CD8-positive, alpha-beta memory T cell (primary cell): ENCODE measurements at regions of chr3 and their contacts with region 1.

Region 1: DNA sequence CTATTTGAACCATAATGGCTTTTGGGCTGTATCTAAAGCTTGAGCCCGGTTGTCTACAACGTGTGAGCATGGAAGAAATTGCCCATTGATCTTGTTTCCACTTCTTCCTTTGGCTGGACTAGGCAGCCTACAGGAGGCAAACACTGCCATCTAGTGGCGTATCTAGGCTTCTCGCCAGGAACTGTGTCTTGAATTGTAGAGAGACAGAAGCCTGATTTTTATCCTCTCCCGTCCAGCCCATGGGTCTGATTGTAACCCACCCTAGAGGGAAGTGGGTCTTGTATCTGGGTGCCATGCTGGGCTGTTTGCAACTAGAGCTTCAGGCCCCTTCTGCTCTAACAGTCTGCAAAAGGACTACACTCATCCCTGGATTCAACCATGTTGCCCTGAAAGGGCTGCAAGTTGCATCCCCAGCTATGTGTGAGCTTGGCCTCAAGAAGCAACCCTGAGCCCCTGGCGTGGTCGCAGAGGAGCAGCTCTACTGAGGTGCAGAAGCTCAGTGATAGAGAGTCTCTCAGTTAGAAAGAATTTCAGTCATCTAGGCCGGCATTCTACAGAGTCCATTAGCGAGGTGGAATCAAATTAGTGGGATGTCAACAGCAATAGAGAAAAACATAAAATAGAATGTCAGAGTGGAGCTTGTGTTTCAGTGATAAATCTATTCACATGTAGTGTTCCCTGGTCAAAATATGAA is 170.2 kb upstream of the UMPS start:
- DNase-seq: peak in 4 of 5 donors; percentile 10 to 57 (median 27)
- H3K4me3 ChIP-seq: no peak overlapping the region
- H3K4me3 Mint-ChIP-seq: no peak overlapping the region
- H3K27ac ChIP-seq: no peak overlapping the region
- H3K27ac Mint-ChIP-seq: no peak overlapping the region
- H3K4me1 ChIP-seq: no peaks in the 10 kb centered on the region
- H3K4me1 Mint-ChIP-seq: no peaks in the 10 kb centered on the region
- H3K27me3 ChIP-seq: no peaks in the 10 kb centered on the region
- H3K27me3 Mint-ChIP-seq: peaks cover 18 to 47% of the 10 kb centered on the region in 2 donors

Region 2: DNA sequence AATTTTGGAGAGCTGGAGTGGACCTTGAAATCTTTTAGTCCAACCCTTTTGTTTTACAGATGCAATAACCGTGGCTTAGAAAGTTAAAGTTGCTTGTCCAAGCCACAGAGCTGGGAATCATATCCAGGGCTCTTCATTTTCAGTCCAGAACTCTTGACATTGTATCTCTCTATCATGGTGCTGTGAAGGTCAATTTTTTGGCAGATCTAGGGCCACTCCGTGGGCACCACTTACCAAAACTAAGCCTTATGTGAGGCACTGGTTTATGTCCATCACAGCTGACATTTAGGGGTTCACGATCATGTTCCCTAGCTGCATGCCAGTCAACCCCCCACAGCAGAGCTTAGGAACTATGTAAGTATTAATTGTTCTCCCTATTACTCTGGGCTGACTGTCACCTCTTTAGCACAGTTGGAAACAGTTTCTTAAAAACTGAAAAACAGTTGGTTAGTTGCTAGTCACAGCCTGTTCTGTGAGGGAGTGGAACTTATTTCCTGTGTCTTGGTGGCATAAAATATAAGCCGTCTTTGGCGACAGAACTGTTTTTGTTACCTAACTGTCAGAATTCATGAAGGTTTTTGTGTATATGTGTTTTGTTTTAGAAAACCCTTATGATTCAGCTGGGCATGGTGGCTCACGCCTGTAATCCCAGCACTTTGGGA is 19.3 kb before region 1 on chr3:
- CTCF ChIA-PET with region 1: interaction called, 10 read pairs
- POLR2A ChIA-PET with region 1: no interaction called
- DNase-seq: no peak
- H3K4me3 ChIP-seq: no peak overlapping the region
- H3K4me3 Mint-ChIP-seq: no peak overlapping the region
- H3K27ac ChIP-seq: no peak overlapping the region
- H3K27ac Mint-ChIP-seq: no peak overlapping the region
- H3K4me1 ChIP-seq: no peaks in the 10 kb centered on the region
- H3K4me1 Mint-ChIP-seq: no peaks in the 10 kb centered on the region
- H3K27me3 ChIP-seq: peaks cover 6% of the 10 kb centered on the region
- H3K27me3 Mint-ChIP-seq: peaks cover 7 to 11% of the 10 kb centered on the region in 2 donors

Region 3: GRCh38 chr3:124688581-124689454 is 128.8 kb after region 1 on chr3:
- CTCF ChIA-PET with region 1: interaction called, 79 read pairs
- POLR2A ChIA-PET with region 1: no interaction called
- DNase-seq: peak; percentile 48 to 71 (median 54)
- H3K4me3 ChIP-seq: no peak overlapping the region
- H3K4me3 Mint-ChIP-seq: no peak overlapping the region
- H3K27ac ChIP-seq: no peak overlapping the region
- H3K27ac Mint-ChIP-seq: no peak overlapping the region
- H3K4me1 ChIP-seq: no peaks in the 10 kb centered on the region
- H3K4me1 Mint-ChIP-seq: peaks cover 2 to 6% (median 5%) of the 10 kb centered on the region in 3 donors
- H3K27me3 ChIP-seq: no peaks in the 10 kb centered on the region
- H3K27me3 Mint-ChIP-seq: peaks cover 15 to 30% of the 10 kb centered on the region in 2 donors